CD8-positive, alpha-beta T cell (primary cell): ENCODE measurements at regions of chr7 and their contacts with region 1.

Region 1: DNA sequence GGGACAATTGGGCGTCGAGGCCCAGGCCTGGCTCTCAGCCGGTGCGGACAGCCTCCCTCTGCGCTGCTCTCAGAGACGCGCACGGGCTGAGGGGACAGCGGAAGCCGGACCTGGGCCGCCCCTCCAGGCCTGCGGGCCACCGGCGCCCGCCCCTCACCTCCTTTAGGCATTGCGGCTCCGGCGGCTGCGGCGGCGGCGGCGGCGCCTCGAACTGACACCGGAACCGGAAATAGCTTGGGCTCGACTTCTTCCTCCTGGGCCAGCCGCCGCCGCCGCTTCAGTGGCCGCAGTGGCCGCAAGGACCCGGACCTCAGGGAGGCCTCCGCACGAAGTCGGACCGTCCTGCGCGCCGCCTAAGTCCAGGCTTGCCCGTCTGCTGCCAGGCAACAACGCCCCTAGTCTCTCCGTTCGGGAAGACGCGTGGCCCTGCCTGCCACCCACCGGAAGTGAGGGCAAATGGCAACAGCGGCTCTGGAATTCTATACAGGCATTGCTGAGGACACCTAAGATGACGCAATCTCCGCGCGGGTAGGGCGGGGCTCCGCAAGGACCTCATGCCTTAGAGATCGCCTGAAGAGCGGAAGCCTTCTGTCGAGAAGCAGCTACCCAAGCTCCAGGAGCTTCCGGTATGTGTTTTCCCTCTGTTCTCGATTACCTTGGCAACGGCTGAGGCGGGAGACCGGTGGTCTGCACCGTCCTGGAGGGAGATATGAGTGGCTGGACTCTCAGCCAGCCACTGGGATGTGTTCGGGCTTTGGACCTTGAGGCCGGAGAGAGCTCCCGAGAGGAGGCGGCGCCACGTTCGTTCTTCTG is at the starts of genes BUD31 and PDAP1:
- DNase-seq: peak; percentile 91 to 99 (median 93)
- ATAC-seq: peak; percentile 91
- H3K4me3 ChIP-seq: peak within 1 kb of the TSS; percentile 66 to 84
- H3K4me3 Mint-ChIP-seq: peak within 1 kb of the TSS; percentile 94
- H3K27ac ChIP-seq: peak within 1 kb of the TSS; percentile 83 to 96
- H3K27ac Mint-ChIP-seq: peak within 1 kb of the TSS; percentile 99
- H3K4me1 ChIP-seq: peaks cover 35% of the 10 kb centered on the region
- H3K4me1 Mint-ChIP-seq: peaks cover 62% of the 10 kb centered on the region
- H3K27me3 ChIP-seq: no peaks in the 10 kb centered on the region
- H3K27me3 Mint-ChIP-seq: no peaks in the 10 kb centered on the region
- CTCF ChIP-seq: peak; percentile 19
- total RNA-seq, gene BUD31: 144 TPM
- total RNA-seq, gene PDAP1: 34.5 to 36.2 TPM

Region 2: GRCh38 chr7:99325545-99326407 is 82.8 kb before region 1 on chr7 and contains the start of gene ARPC1A:
- CTCF ChIA-PET with region 1: no interaction called
- POLR2A ChIA-PET with region 1: interaction called, 4 read pairs
- intact Hi-C with region 1: loop called in 1 of 2 experiments (anchors 2 kb)
- DNase-seq: peak; percentile 88 to 96 (median 92)
- ATAC-seq: peak; percentile 92
- H3K4me3 ChIP-seq: peak within 1 kb of the TSS; percentile 97 to 100
- H3K4me3 Mint-ChIP-seq: peak within 1 kb of the TSS; percentile 89
- H3K27ac ChIP-seq: peak within 1 kb of the TSS; percentile 79 to 87
- H3K27ac Mint-ChIP-seq: peak within 1 kb of the TSS; percentile 94
- H3K4me1 ChIP-seq: peaks cover 45% of the 10 kb centered on the region
- H3K4me1 Mint-ChIP-seq: peaks cover 43% of the 10 kb centered on the region
- H3K27me3 ChIP-seq: no peaks in the 10 kb centered on the region
- H3K27me3 Mint-ChIP-seq: no peaks in the 10 kb centered on the region
- CTCF ChIP-seq: no peak
- total RNA-seq, gene ARPC1A: 33.1 to 38.2 TPM

Region 3: GRCh38 chr7:99380032-99380822 is 28.4 kb before region 1 on chr7:
- CTCF ChIA-PET with region 1: interaction called, 6 read pairs
- POLR2A ChIA-PET with region 1: interaction called, 15 read pairs
- intact Hi-C with region 1: loop called (anchors 1 kb)
- DNase-seq: peak in 4 of 9 experiments; percentile 38 to 76 (median 46)
- ATAC-seq: peak; percentile 5
- H3K4me3 ChIP-seq: peak overlapping the region; percentile 43 to 57
- H3K4me3 Mint-ChIP-seq: peak overlapping the region; percentile 84
- H3K27ac ChIP-seq: peak overlapping the region; percentile 82 to 100
- H3K27ac Mint-ChIP-seq: peak overlapping the region; percentile 99
- H3K4me1 ChIP-seq: peaks cover 83% of the 10 kb centered on the region
- H3K4me1 Mint-ChIP-seq: peaks cover 61% of the 10 kb centered on the region
- H3K27me3 ChIP-seq: no peaks in the 10 kb centered on the region
- H3K27me3 Mint-ChIP-seq: no peaks in the 10 kb centered on the region
- CTCF ChIP-seq: no peak

Region 4: GRCh38 chr7:99438573-99439480 is 30.2 kb after region 1 on chr7 and contains the starts of genes CPSF4 and PTCD1:
- CTCF ChIA-PET with region 1: no interaction called
- POLR2A ChIA-PET with region 1: interaction called, 5 read pairs
- intact Hi-C with region 1: loop called (anchors 1 to 2 kb)
- DNase-seq: peak; percentile 75 to 93 (median 88)
- ATAC-seq: peak; percentile 78
- H3K4me3 ChIP-seq: peak within 1 kb of the TSS; percentile 66 to 98
- H3K4me3 Mint-ChIP-seq: peak within 1 kb of the TSS; percentile 94
- H3K27ac ChIP-seq: peak within 1 kb of the TSS; percentile 63 to 82
- H3K27ac Mint-ChIP-seq: peak within 1 kb of the TSS; percentile 89
- H3K4me1 ChIP-seq: peaks cover 16% of the 10 kb centered on the region
- H3K4me1 Mint-ChIP-seq: peaks cover 33% of the 10 kb centered on the region
- H3K27me3 ChIP-seq: no peaks in the 10 kb centered on the region
- H3K27me3 Mint-ChIP-seq: no peaks in the 10 kb centered on the region
- CTCF ChIP-seq: no peak
- total RNA-seq, gene CPSF4: 33.4 to 33.9 TPM
- total RNA-seq, gene PTCD1: 4.2 to 4.5 TPM

Region 5: DNA sequence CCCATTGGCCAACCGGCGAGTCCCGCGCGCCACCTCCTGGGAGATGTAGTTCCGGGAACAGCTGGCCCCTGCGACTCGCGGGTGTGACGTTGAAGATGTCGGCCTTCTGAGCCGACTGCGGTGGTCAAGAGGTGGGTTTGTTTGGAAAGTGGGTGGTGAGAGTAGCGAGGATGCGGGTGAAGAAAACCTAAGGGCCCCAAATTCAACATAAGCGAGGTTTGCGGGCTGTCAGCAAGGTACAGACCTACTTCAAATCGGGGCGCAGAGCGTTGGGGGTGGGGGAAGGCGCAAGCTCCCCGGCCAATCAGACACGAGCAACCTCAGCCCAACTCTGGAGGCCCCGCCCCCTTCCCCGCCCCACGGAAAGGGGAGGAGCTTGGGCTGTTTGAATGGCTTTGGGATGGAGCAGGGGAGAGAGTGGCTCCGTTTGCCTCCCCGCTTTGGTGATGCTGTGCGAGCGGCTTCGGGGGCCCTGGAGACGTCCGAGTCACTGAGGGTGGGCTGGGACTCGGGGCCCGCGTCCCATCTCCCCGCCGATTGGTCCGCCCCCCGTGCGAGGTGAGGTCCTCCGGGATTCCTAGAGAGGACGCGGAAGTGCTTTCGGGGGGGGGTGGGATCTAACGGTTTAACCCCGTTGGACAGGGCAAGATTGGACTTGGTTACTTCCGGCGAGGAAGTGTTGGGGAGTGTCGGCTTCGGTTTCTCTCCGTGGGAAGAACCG is 96.2 kb after region 1 on chr7 and contains the start of gene ZKSCAN5:
- CTCF ChIA-PET with region 1: interaction called, 3 read pairs
- POLR2A ChIA-PET with region 1: interaction called, 7 read pairs
- intact Hi-C with region 1: loop called (anchors 1 to 2 kb)
- DNase-seq: peak; percentile 95 to 99 (median 97)
- ATAC-seq: peak; percentile 87
- H3K4me3 ChIP-seq: peak within 1 kb of the TSS; percentile 87 to 93
- H3K4me3 Mint-ChIP-seq: peak within 1 kb of the TSS; percentile 99
- H3K27ac ChIP-seq: peak within 1 kb of the TSS; percentile 67 to 96
- H3K27ac Mint-ChIP-seq: peak within 1 kb of the TSS; percentile 97
- H3K4me1 ChIP-seq: peaks cover 29% of the 10 kb centered on the region
- H3K4me1 Mint-ChIP-seq: peaks cover 39% of the 10 kb centered on the region
- H3K27me3 ChIP-seq: no peaks in the 10 kb centered on the region
- H3K27me3 Mint-ChIP-seq: no peaks in the 10 kb centered on the region
- CTCF ChIP-seq: no peak
- total RNA-seq, gene ZKSCAN5: 6.0 to 6.2 TPM